Heart left ventricle (tissue), 16 donors: ENCODE measurements at regions of chr10 and their contacts with region 1.

Region 1: DNA sequence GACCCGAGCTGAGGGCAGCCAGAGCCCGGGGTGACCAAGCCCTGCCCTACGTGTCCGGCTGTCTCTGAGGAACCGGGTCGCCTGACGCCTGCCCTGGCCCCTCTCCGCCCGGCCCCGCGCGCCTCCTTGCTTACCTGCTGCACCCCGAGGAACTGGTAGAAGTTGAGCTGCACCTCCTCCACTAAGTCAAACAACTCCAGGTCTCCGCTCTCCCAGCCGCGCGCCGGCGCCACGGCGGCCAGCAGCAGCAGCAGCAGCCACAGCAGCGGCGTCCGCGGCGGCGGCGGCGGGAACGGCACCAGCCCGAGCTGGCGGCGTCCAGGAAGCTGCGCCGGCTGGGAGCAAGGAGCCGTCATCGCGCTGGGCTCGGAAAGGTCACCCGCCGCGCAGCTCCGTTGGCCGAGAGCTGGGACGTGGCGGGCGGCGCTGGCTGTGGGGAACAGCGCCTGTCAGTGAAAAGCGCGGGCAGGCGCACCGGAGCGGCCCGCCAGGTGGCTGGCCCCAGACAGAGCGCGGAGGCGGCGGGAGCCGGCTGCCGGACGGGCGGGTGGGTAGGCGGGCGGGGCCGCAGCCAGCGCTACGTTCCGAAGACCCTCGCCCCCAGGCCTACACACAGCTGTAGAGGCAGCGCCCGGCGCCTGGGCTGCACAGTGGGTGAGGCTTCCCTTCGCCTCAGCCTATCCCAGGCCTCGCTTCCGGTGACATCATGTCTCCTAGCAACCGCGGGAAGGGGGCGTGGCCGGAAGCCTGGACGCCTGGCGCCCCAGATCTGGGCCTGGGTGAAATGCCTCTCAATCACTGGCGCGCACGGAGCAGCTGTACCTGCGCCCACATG is at the start of gene DNAJC1:
- DNase-seq: peak; percentile 97 to 99 (median 98)
- ATAC-seq: peak; percentile 100
- H3K4me3 ChIP-seq: peak within 1 kb of the TSS; percentile 69 to 96 (median 78)
- H3K27ac ChIP-seq: peak within 1 kb of the TSS; percentile 78 to 99 (median 96)
- H3K4me1 ChIP-seq: peaks cover 0 to 26% (median 14%) of the 10 kb centered on the region in 12 donors
- H3K27me3 ChIP-seq: no peaks in the 10 kb centered on the region
- CTCF ChIP-seq: peak in 4 of 12 donors; percentile 4 to 29 (median 16)
- POLR2A ChIP-seq: peak in 1 of 2 donors; percentile 95
- total RNA-seq, gene DNAJC1: 9.5 to 68.4 (median 14.1) TPM

Region 2: DNA sequence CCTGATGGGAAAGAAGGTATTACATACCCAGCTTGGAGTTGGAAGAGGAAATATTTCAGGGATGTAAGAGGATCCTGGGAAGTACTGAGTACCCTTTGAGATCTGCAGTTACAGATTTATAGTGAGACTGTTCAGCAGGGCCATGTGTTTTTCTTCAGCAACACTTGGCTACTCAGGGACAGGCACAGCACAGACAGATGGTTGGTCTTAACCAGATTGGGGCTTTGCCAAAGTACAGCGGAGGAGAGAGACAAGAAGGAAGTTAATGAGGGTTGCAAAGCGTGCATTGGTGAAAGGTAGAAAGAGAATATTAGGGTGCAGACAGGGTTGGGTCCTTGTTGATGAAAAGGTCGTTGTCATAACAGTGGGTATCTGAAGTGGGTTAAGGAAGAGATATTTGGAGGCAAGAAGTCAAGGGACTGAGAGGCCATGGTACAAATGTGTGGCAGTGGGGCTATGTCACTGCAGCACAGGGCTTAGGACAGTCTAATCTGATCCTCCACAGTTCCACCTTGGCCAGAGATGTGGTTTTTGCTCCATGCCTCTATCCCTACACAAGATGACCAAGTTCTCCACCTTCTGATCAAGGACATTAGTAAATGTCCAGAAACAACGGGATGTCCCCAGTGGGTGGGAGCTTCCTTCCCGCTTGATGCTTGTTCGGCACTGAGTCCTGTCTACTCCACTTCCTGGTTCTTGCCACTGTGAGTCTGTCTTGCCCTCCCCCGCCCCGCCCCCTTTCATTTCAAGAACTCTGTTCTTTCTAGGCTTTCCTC is 19.1 kb after region 1 on chr10:
- intact Hi-C with region 1: loop called in 1 of 10 experiments (anchors 1 kb)
- DNase-seq: peak in 4 of 5 donors; percentile 61 to 77 (median 73)
- ATAC-seq: peak; percentile 92 to 98 (median 96)
- H3K4me3 ChIP-seq: peak overlapping the region in 7 of 12 donors; percentile 3 to 39 (median 17)
- H3K27ac ChIP-seq: peak overlapping the region in 4 of 12 donors; percentile 6 to 45 (median 32)
- H3K4me1 ChIP-seq: peaks cover 0 to 20% (median 10%) of the 10 kb centered on the region in 12 donors
- H3K27me3 ChIP-seq: no peaks in the 10 kb centered on the region
- CTCF ChIP-seq: no peak
- POLR2A ChIP-seq: no peak

Region 3: GRCh38 chr10:22148961-22149360 is 145.7 kb after region 1 on chr10:
- intact Hi-C with region 1: no loop called
- DNase-seq: no peak
- ATAC-seq: no peak
- H3K4me3 ChIP-seq: no peak overlapping the region
- H3K27ac ChIP-seq: no peak overlapping the region
- H3K4me1 ChIP-seq: peaks cover 0 to 4% (median 0%) of the 10 kb centered on the region in 12 donors
- H3K27me3 ChIP-seq: no peaks in the 10 kb centered on the region
- CTCF ChIP-seq: no peak
- POLR2A ChIP-seq: no peak

Region 4: DNA sequence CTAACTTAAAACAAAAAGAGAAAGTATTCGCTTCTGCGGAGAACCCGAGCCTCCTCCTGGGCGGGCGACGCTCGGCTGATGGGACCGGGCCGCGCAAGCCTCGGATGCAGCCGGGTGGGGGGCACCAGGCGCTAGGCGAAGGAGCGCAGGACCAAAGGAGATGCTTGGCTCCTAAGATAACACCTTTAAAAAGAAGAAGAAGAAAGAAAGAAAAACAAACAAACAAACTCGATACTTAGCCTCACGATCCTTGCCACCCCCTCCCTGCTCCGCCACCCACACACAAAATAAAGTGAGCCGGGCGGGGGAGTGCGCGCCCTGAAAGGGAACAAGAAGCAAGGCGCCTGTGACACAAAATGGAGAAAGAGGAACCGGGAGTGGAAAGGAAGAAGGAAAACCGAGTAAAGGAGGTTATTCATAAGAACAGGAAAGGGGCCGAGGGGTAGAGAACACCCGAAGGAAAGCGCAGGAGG is 248.5 kb after region 1 on chr10:
- intact Hi-C with region 1: loop called in 5 of 10 experiments (anchors 5 to 10 kb)
- DNase-seq: peak; percentile 65 to 81 (median 76)
- ATAC-seq: peak; percentile 62 to 78 (median 68)
- H3K4me3 ChIP-seq: peak overlapping the region; percentile 65 to 85 (median 76)
- H3K27ac ChIP-seq: peak overlapping the region; percentile 96 to 98 (median 97)
- H3K4me1 ChIP-seq: peaks cover 0 to 18% (median 2%) of the 10 kb centered on the region in 12 donors
- H3K27me3 ChIP-seq: no peaks in the 10 kb centered on the region
- CTCF ChIP-seq: peak in 2 of 12 donors; percentile 6 to 15
- POLR2A ChIP-seq: no peak

Region 5: DNA sequence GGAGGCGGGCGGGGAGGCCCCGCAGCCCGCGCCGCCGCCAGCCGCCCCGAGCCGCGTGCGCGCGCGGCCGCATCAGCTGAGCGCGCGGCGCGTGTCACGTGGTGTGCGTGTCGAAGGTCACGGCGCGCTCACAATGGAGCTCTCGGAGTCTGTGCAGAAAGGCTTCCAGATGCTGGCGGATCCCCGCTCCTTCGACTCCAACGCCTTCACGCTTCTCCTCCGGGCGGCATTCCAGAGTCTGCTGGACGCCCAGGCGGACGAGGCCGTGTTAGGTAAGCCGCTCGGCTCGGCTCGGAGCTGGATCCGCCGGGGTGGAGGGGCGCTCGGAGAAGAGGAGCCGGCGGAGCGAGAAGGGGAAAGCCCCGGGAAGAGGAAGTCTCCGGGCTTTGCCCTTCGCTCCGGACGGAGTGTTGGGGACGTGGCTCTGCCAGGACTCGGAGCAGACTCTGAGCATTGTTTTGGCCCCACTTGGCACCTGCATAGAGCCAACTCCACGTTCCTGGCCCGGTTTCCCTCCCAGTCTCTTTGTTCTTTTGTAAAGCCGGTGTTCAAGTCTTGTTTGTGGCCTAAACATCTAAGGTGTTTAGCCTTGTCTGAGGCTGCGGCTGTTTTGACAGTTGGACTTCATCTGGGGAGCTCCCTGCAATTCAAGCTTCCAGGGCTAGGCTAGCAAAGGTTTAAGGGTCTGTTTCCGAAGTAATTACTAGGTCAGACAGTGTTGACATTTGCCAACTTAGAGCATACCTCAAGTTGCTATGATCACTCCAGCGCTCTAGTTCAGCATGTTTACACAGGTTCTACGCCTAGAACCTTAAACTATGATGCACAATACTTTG is 313.2 kb after region 1 on chr10 and contains the start of gene COMMD3:
- intact Hi-C with region 1: loop called in 9 of 10 experiments (anchors 2 to 10 kb)
- DNase-seq: peak; percentile 90 to 94 (median 91)
- ATAC-seq: peak; percentile 89 to 93 (median 91)
- H3K4me3 ChIP-seq: peak within 1 kb of the TSS; percentile 66 to 85 (median 79)
- H3K27ac ChIP-seq: peak within 1 kb of the TSS; percentile 71 to 98 (median 95)
- H3K4me1 ChIP-seq: peaks cover 0 to 42% (median 28%) of the 10 kb centered on the region in 12 donors
- H3K27me3 ChIP-seq: no peaks in the 10 kb centered on the region
- CTCF ChIP-seq: no peak
- POLR2A ChIP-seq: peak in 1 of 2 donors; percentile 81
- total RNA-seq, gene COMMD3: 44.4 to 88.3 (median 74.1) TPM

Region 6: GRCh38 chr10:22340362-22341189 is 337.3 kb after region 1 on chr10:
- intact Hi-C with region 1: loop called in 1 of 10 experiments (anchors 10 kb)
- DNase-seq: peak; percentile 69 to 84 (median 72)
- ATAC-seq: peak; percentile 68 to 87 (median 86)
- H3K4me3 ChIP-seq: peak overlapping the region; percentile 62 to 94 (median 81)
- H3K27ac ChIP-seq: peak overlapping the region; percentile 81 to 97 (median 92)
- H3K4me1 ChIP-seq: peaks cover 8 to 37% (median 18%) of the 10 kb centered on the region in 12 donors
- H3K27me3 ChIP-seq: peaks cover 66 to 91% (median 84%) of the 10 kb centered on the region in 9 donors
- CTCF ChIP-seq: no peak
- POLR2A ChIP-seq: peak in 1 of 2 donors; percentile 57

Region 7: GRCh38 chr10:22436884-22437619 is 433.8 kb after region 1 on chr10:
- intact Hi-C with region 1: loop called in 3 of 10 experiments (anchors 5 to 10 kb)
- DNase-seq: peak; percentile 90 to 96 (median 93)
- ATAC-seq: peak; percentile 89 to 97 (median 97)
- H3K4me3 ChIP-seq: peak overlapping the region; percentile 54 to 88 (median 76)
- H3K27ac ChIP-seq: peak overlapping the region; percentile 78 to 98 (median 95)
- H3K4me1 ChIP-seq: peaks cover 0 to 30% (median 15%) of the 10 kb centered on the region in 12 donors
- H3K27me3 ChIP-seq: peaks cover 0 to 3% (median 0%) of the 10 kb centered on the region in 9 donors
- CTCF ChIP-seq: peak in 8 of 12 donors; percentile 5 to 50 (median 27)
- POLR2A ChIP-seq: peak in 1 of 2 donors; percentile 78

Region 8: GRCh38 chr10:23067939-23068775 is 1064.9 kb after region 1 on chr10:
- intact Hi-C with region 1: loop called in 4 of 10 experiments (anchors 5 to 10 kb)
- DNase-seq: peak; percentile 59 to 83 (median 66)
- ATAC-seq: peak; percentile 25 to 73 (median 68)
- H3K4me3 ChIP-seq: no peak overlapping the region
- H3K27ac ChIP-seq: no peak overlapping the region
- H3K4me1 ChIP-seq: peaks cover 0 to 23% (median 10%) of the 10 kb centered on the region in 12 donors
- H3K27me3 ChIP-seq: no peaks in the 10 kb centered on the region
- CTCF ChIP-seq: peak; percentile 70 to 90 (median 82)
- POLR2A ChIP-seq: no peak